ENCODE measurements at regions of chr3 and their contacts with region 1.

Region 1: DNA sequence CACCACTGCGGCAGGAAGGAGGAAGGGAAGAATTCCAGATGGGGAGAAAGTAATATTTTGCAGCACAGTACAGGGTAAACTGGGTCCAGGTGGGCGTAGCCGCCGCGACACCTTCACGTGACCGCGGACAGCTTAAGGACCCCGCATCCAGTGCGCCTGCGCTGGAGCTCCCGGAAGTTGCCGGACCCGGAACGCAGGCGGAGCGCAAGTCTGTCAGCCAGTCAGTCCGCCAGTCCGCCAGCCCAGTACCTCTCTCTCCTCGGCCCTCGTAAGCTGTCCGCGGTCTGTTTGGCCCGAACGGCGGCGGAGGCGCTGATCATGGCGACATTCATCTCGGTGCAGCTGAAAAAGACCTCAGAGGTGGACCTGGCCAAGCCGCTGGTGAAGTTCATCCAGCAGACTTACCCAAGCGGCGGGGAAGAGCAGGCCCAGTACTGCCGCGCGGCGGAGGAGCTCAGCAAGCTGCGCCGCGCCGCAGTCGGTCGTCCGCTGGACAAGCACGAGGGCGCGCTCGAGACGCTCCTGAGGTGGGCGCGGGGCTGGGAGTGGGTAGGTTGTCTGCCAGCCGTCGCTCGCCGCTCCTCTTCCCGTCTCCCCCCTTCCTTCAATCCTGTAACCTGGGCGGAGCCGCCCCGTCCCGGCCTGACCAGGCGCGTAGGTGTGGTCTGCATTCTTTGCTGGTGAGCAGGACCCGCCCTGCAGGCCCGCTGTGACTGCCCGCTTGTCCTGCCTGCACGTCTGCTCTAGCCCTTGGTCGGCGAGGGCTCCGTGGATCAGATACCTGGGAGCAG is at the start of gene PDCD6IP:
- DNase-seq: peak; percentile 95 to 97 (median 96)
- ATAC-seq: peak; percentile 95
- H3K4me3 ChIP-seq: peak within 1 kb of the TSS; percentile 81
- H3K27ac ChIP-seq: peak within 1 kb of the TSS; percentile 95
- H3K4me1 ChIP-seq: peaks cover 6 to 18% of the 10 kb centered on the region in 2 experiments; a peak in 4 of 5 replicates
- H3K27me3 ChIP-seq: no peaks in the 10 kb centered on the region
- CTCF ChIP-seq: peak; percentile 34 to 66 (median 37); a peak in 5 of 6 replicates
- EP300 ChIP-seq: no peak; the same call in 1 of the 2 replicates
- POLR2A ChIP-seq: peak; percentile 99
- RAD21 ChIP-seq: peak in 1 of 2 experiments; percentile 34
- polyA plus RNA-seq, gene PDCD6IP: 40.2 to 57.6 TPM

Region 2: DNA sequence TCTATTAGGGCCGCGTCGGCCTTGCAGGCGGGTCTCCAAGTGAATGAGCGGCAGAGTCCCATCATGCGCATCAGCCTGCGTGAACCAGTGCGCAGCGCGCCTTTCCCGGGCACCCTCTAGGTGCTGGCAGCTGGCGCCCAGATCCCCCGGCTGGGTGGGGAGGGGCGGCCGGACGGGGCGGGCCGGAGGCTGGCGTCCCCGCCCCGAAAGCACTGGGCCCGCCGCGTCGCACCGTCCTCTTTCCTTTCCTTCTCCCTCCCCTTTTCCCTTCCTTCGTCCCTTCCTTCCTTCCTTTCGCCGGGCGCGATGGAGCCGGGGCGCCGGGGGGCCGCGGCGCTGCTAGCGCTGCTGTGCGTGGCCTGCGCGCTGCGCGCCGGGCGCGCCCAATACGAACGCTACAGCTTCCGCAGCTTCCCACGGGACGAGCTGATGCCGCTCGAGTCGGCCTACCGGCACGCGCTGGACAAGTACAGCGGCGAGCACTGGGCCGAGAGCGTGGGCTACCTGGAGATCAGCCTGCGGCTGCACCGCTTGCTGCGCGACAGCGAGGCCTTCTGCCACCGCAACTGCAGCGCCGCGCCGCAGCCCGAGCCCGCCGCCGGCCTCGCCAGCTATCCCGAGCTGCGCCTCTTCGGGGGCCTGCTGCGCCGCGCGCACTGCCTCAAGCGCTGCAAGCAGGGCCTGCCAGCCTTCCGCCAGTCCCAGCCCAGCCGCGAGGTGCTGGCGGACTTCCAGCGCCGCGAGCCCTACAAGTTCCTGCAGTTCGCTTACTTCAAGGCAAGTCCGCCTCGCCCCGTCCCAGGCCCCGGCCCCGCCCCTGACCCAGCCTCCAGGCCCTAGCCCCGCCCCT is 684.6 kb before region 1 on chr3 and contains the start of gene CRTAP:
- CTCF ChIA-PET with region 1: no interaction called
- POLR2A ChIA-PET with region 1: no interaction called
- in situ Hi-C with region 1: no loop called
- intact Hi-C with region 1: loop called (anchors 10 kb)
- DNase-seq: peak; percentile 94 to 98 (median 97)
- ATAC-seq: peak; percentile 94
- H3K4me3 ChIP-seq: peak within 1 kb of the TSS; percentile 84
- H3K27ac ChIP-seq: peak within 1 kb of the TSS; percentile 93
- H3K4me1 ChIP-seq: peaks cover 4 to 15% of the 10 kb centered on the region in 2 experiments; a peak in 3 of 5 replicates
- H3K27me3 ChIP-seq: no peaks in the 10 kb centered on the region
- CTCF ChIP-seq: no peak
- EP300 ChIP-seq: no peak
- POLR2A ChIP-seq: peak; percentile 81
- RAD21 ChIP-seq: peak; percentile 10 to 16; a peak in 2 of 4 replicates
- polyA plus RNA-seq, gene CRTAP: 10.0 to 10.1 TPM

Region 3: GRCh38 chr3:33749546-33750210 is 48.9 kb before region 1 on chr3:
- CTCF ChIA-PET with region 1: no interaction called
- POLR2A ChIA-PET with region 1: no interaction called
- in situ Hi-C with region 1: no loop called
- intact Hi-C with region 1: no loop called
- DNase-seq: no peak
- ATAC-seq: no peak
- H3K4me3 ChIP-seq: no peak overlapping the region
- H3K27ac ChIP-seq: no peak overlapping the region
- H3K4me1 ChIP-seq: no peaks in the 10 kb centered on the region; a peak in 1 of 5 replicates
- H3K27me3 ChIP-seq: no peaks in the 10 kb centered on the region
- CTCF ChIP-seq: no peak
- EP300 ChIP-seq: no peak
- POLR2A ChIP-seq: no peak
- RAD21 ChIP-seq: no peak

Region 4: DNA sequence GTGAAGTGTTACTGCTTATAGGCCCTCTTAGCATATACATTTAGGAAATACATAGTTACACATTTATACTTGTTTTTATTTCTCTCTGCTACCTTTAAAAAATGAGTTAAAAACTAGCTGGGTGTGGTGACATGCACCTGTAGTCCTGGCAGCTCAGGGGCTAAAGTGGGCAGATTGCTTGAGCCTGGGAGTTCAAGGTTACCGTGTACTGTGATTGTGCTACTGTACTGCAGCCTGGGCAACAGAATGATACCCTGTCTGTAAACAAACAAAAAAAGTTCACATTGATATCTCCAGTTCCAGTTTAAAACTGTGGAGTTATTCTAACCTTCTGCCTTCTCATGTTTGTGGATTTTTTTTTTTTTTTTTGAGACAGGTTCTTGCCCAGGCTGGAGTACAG is 11.9 kb after region 1 on chr3:
- CTCF ChIA-PET with region 1: no interaction called
- POLR2A ChIA-PET with region 1: interaction called, 33 read pairs
- in situ Hi-C with region 1: no loop called
- intact Hi-C with region 1: no loop called
- DNase-seq: no peak
- ATAC-seq: peak; percentile 26; the same call in 2 of the 3 replicates
- H3K4me3 ChIP-seq: no peak overlapping the region
- H3K27ac ChIP-seq: no peak overlapping the region
- H3K4me1 ChIP-seq: peaks cover 4 to 11% of the 10 kb centered on the region in 2 experiments; a peak in 3 of 5 replicates
- H3K27me3 ChIP-seq: no peaks in the 10 kb centered on the region
- CTCF ChIP-seq: no peak
- EP300 ChIP-seq: no peak
- POLR2A ChIP-seq: no peak
- RAD21 ChIP-seq: no peak

Region 5: GRCh38 chr3:33936921-33937525 is 138.4 kb after region 1 on chr3:
- CTCF ChIA-PET with region 1: no interaction called
- POLR2A ChIA-PET with region 1: no interaction called
- in situ Hi-C with region 1: no loop called
- intact Hi-C with region 1: loop called (anchors 10 kb)
- DNase-seq: peak in 1 of 4 experiments; percentile 41
- ATAC-seq: peak; percentile 50
- H3K4me3 ChIP-seq: peak overlapping the region; percentile 38
- H3K27ac ChIP-seq: peak overlapping the region; percentile 78
- H3K4me1 ChIP-seq: peaks cover 12 to 55% of the 10 kb centered on the region in 2 experiments
- H3K27me3 ChIP-seq: no peaks in the 10 kb centered on the region
- CTCF ChIP-seq: no peak
- EP300 ChIP-seq: no peak
- POLR2A ChIP-seq: no peak
- RAD21 ChIP-seq: no peak